Mammary epithelial cell (primary cell): ENCODE measurements at regions of chr16 and their contacts with region 1.

Region 1: GRCh38 chr16:69565671-69566239 is at the start of gene NFAT5:
- DNase-seq: peak; percentile 85
- H3K4me3 ChIP-seq: peak within 1 kb of the TSS; percentile 90 to 100 (median 95)
- H3K27ac ChIP-seq: peak within 1 kb of the TSS; percentile 93
- H3K4me1 ChIP-seq: peaks cover 19% of the 10 kb centered on the region
- H3K27me3 ChIP-seq: no peaks in the 10 kb centered on the region
- CTCF ChIP-seq: peak in 1 of 2 donors; percentile 11
- total RNA-seq, gene NFAT5: 37.5 to 48.2 TPM

Region 2: GRCh38 chr16:69443927-69444631 is 121.7 kb before region 1 on chr16:
- CTCF ChIA-PET with region 1: no interaction called
- dilution Hi-C with region 1: no loop called
- in situ Hi-C with region 1: no loop called
- intact Hi-C with region 1: loop called (anchors 1 kb)
- DNase-seq: peak; percentile 50
- H3K4me3 ChIP-seq: peak overlapping the region; percentile 20 to 27 (median 25)
- H3K27ac ChIP-seq: peak overlapping the region; percentile 59
- H3K4me1 ChIP-seq: peaks cover 19% of the 10 kb centered on the region
- H3K27me3 ChIP-seq: no peaks in the 10 kb centered on the region
- CTCF ChIP-seq: no peak

Region 3: GRCh38 chr16:69476920-69477418 is 88.8 kb before region 1 on chr16:
- CTCF ChIA-PET with region 1: no interaction called
- dilution Hi-C with region 1: no loop called
- in situ Hi-C with region 1: no loop called
- intact Hi-C with region 1: loop called (anchors 1 kb)
- DNase-seq: peak; percentile 76
- H3K4me3 ChIP-seq: no peak overlapping the region
- H3K27ac ChIP-seq: no peak overlapping the region
- H3K4me1 ChIP-seq: peaks cover 32% of the 10 kb centered on the region
- H3K27me3 ChIP-seq: no peaks in the 10 kb centered on the region
- CTCF ChIP-seq: no peak

Region 4: DNA sequence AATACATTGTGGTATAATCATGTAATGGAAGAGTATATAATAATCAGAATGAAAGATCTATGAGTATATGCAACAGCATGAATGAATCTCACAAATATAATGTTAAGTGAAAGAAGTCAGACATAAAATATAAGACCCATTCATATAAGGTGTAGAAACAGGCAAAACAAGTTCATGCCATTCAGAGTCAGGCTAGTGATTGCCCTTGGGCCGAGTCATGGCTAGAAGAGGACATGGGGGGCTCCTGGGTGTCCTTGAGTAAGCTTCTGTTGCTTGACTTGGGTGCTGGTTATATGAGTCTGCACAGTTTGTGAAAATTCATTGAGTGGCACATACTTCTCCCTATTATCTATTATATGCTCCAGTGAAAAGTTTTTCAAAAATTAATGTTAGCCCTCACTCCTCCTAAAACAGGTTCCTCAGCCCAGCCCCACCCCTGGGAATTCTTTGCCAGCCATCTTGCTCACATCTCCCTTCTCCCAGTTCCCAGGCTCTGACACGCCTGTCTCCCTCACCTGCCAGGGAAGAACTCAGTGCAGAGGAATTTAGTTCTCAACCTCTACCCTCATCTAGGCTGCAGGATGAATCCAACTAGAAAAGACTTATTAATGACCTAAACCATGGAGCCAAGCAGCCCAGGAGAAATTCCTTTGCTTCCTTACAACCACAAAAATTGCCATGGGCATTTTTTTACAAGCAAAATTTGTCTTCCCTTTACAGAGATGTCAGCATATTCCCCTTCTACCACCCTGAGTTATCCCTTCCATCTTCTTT is 52.4 kb before region 1 on chr16:
- CTCF ChIA-PET with region 1: no interaction called
- dilution Hi-C with region 1: no loop called
- in situ Hi-C with region 1: no loop called
- intact Hi-C with region 1: loop called (anchors 1 kb)
- DNase-seq: peak; percentile 95
- H3K4me3 ChIP-seq: no peak overlapping the region
- H3K27ac ChIP-seq: peak overlapping the region; percentile 56
- H3K4me1 ChIP-seq: peaks cover 28% of the 10 kb centered on the region
- H3K27me3 ChIP-seq: no peaks in the 10 kb centered on the region
- CTCF ChIP-seq: no peak

Region 5: GRCh38 chr16:69523566-69524305 is 42.0 kb before region 1 on chr16:
- CTCF ChIA-PET with region 1: no interaction called
- dilution Hi-C with region 1: no loop called
- in situ Hi-C with region 1: no loop called
- intact Hi-C with region 1: no loop called
- DNase-seq: no peak
- H3K4me3 ChIP-seq: no peak overlapping the region
- H3K27ac ChIP-seq: no peak overlapping the region
- H3K4me1 ChIP-seq: no peaks in the 10 kb centered on the region
- H3K27me3 ChIP-seq: no peaks in the 10 kb centered on the region
- CTCF ChIP-seq: no peak

Region 6: GRCh38 chr16:69613378-69614154 is 47.8 kb after region 1 on chr16:
- CTCF ChIA-PET with region 1: no interaction called
- dilution Hi-C with region 1: no loop called
- in situ Hi-C with region 1: no loop called
- intact Hi-C with region 1: loop called (anchors 5 kb)
- DNase-seq: peak; percentile 88
- H3K4me3 ChIP-seq: peak overlapping the region in 1 of 3 experiments; percentile 3
- H3K27ac ChIP-seq: peak overlapping the region; percentile 94
- H3K4me1 ChIP-seq: peaks cover 24% of the 10 kb centered on the region
- H3K27me3 ChIP-seq: no peaks in the 10 kb centered on the region
- CTCF ChIP-seq: no peak

Region 7: GRCh38 chr16:69754469-69755310 is 188.9 kb after region 1 on chr16 and contains the start of gene NOB1:
- CTCF ChIA-PET with region 1: interaction called, 3 read pairs
- dilution Hi-C with region 1: no loop called
- in situ Hi-C with region 1: no loop called
- intact Hi-C with region 1: loop called (anchors 2 kb)
- DNase-seq: peak; percentile 95
- H3K4me3 ChIP-seq: peak within 1 kb of the TSS; percentile 63 to 97 (median 75)
- H3K27ac ChIP-seq: peak within 1 kb of the TSS; percentile 79
- H3K4me1 ChIP-seq: peaks cover 2% of the 10 kb centered on the region
- H3K27me3 ChIP-seq: no peaks in the 10 kb centered on the region
- CTCF ChIP-seq: peak; percentile 86 to 100
- total RNA-seq, gene NOB1: 30.7 to 72.3 TPM